ENCODE measurements at regions of chr12 and their contacts with region 1.

Region 1: GRCh38 chr12:118372541-118373495 is at the start of gene TAOK3:
- DNase-seq: peak; percentile 98
- H3K4me3 Mint-ChIP-seq: peak within 1 kb of the TSS; percentile 97
- H3K27ac Mint-ChIP-seq: peak within 1 kb of the TSS; percentile 97
- H3K4me1 Mint-ChIP-seq: peaks cover 48% of the 10 kb centered on the region
- H3K27me3 Mint-ChIP-seq: peaks cover 14% of the 10 kb centered on the region
- total RNA-seq, gene TAOK3: 52.5 to 63.3 TPM

Region 2: DNA sequence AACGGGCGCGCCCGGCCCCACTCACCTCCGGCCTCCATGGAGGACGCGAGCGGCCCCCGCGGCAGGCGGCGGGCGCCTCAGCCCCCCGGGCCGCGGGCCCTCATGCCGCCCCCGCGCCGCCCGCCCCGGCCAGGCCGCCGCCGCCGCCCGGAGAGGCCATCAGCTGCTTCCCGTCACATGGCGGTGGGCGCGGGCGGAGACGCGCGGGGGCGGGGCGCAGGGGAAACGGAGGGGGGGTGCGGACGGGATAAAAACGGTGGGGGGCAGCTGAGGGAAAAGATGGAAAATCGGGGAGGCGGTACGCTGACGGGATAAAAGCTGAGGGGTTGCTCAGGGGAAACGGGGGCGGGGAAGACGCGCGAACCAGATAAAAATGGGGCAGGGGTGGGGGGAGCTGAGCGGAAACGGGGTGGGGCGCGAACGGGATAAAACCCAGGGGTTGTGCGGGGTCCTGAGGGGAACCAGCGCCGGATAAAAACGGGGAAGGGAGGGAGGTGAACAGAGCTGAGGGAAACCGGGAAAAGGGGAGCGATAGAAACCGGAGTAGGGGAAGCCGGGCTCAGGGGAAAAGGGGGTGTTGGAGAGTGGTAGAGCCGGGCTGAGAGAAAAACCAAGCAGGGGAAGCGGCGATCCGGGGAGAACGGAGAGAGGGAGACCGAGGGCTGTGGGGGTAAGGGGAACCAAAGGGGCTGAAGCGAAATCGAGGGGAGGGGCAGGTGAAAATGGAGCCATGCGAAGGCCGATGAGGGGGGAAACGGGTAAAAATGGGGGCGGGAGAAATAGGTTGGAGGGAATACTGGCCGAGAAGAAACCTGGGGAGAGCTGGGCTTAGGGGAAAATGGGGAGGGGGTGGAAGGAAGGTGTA is 311.6 kb before region 1 on chr12 and contains the start of gene WSB2:
- CTCF ChIA-PET with region 1: interaction called, 10 read pairs
- POLR2A ChIA-PET with region 1: no interaction called
- DNase-seq: peak; percentile 61
- H3K4me3 Mint-ChIP-seq: peak within 1 kb of the TSS; percentile 89
- H3K27ac Mint-ChIP-seq: peak within 1 kb of the TSS; percentile 94
- H3K4me1 Mint-ChIP-seq: peaks cover 59% of the 10 kb centered on the region
- H3K27me3 Mint-ChIP-seq: no peaks in the 10 kb centered on the region
- total RNA-seq, gene WSB2: 44.3 to 46.4 TPM

Region 3: DNA sequence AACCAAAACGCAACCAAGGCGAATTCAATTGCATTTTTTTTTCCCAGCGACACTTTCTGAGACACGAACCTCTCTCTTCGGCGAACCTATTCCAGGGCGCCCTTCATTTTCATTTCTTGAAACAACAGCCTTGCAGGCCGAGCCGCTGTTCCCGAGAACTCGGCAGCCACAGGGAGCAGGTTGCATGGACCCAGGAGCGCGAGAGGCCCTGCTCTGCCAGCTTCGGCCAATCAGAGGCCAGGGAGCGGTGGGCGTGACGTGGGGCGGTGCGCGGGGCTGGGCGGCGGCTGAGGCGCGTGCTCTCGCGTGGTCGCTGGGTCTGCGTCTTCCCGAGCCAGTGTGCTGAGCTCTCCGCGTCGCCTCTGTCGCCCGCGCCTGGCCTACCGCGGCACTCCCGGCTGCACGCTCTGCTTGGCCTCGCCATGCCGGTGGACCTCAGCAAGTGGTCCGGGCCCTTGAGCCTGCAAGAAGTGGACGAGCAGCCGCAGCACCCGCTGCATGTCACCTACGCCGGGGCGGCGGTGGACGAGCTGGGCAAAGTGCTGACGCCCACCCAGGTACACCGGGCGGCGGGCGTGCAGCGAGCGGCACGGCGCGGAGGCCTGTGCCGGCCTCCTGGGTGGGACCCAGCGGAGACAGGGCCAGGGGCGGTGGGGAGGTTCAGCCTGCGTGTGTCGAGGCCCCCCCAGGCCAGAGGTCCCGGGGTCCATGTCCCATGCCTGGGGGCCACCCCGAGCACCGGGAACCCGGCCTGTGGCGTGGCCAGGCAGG is 236.8 kb before region 1 on chr12 and contains the start of gene PEBP1:
- CTCF ChIA-PET with region 1: interaction called, 13 read pairs
- POLR2A ChIA-PET with region 1: no interaction called
- DNase-seq: peak; percentile 94
- H3K4me3 Mint-ChIP-seq: peak within 1 kb of the TSS; percentile 91
- H3K27ac Mint-ChIP-seq: peak within 1 kb of the TSS; percentile 91
- H3K4me1 Mint-ChIP-seq: peaks cover 33% of the 10 kb centered on the region
- H3K27me3 Mint-ChIP-seq: no peaks in the 10 kb centered on the region
- total RNA-seq, gene PEBP1: 96.3 to 104 TPM

Region 4: DNA sequence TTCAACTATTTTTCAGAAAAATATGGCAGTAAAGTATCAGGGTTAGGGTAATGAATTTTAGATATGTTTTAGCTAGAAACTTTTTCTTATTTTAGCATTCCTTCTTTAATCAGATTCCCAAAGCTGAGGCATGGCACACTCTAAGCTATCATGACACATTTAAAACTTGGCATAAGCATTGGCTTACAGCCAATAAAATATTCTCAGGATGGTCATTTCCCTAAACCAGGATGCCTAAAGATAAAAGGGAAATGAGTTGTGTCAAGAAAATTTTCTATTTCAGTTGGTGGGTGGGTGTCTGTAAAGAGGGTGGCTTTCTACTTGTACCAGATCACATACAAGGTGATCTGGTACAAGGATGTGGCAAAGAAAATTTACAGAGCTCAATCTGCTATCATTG is 189.1 kb before region 1 on chr12:
- CTCF ChIA-PET with region 1: interaction called, 34 read pairs
- POLR2A ChIA-PET with region 1: no interaction called
- DNase-seq: no peak
- H3K4me3 Mint-ChIP-seq: no peak overlapping the region
- H3K27ac Mint-ChIP-seq: no peak overlapping the region
- H3K4me1 Mint-ChIP-seq: peaks cover 5% of the 10 kb centered on the region
- H3K27me3 Mint-ChIP-seq: no peaks in the 10 kb centered on the region

Region 5: GRCh38 chr12:118391424-118391823 is 18.6 kb after region 1 on chr12:
- CTCF ChIA-PET with region 1: interaction called, 14 read pairs
- POLR2A ChIA-PET with region 1: no interaction called
- DNase-seq: no peak
- H3K4me3 Mint-ChIP-seq: no peak overlapping the region
- H3K27ac Mint-ChIP-seq: no peak overlapping the region
- H3K4me1 Mint-ChIP-seq: no peaks in the 10 kb centered on the region
- H3K27me3 Mint-ChIP-seq: no peaks in the 10 kb centered on the region